ENCODE measurements at regions of chr22 and their contacts with region 1.

Region 1: DNA sequence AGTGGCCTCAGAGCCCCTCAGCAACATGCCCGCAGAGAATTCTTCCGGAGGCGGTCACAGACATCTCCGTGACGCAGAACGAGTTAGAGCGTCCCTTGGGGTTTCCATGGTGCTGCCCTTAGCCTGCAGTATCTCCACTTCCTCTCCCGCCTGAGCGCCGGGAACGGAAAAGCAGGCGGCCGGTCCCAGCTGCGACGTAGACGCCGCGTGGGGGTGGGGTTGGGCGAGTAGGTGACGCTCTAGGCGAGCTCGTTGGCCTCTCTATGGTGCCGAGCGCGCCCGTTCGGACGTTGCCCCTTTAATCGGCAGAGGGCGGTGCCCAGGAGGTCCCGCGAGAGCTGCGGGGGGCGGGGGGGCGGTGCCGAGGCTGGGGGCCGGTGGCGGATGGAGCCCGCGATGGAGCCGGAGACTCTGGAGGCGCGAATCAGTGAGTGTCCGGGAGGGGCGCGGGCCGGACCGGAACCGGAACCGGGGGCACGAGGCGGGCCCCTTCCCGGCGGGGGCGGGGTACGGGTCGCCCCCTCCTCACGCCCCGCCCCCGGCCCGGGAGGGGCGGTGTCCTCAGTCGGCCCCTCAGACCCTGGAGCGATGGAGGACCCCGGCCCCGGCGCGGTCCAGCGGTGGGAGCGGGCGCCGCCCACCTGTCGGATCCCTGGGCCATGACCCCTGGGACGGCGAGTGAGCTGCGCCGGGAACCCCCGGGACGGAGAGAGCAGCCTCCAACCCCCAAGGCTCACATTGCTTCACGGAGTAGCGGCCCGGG is at the start of gene GGA1:
- DNase-seq: no peak
- ATAC-seq: peak; percentile 83
- H3K4me3 ChIP-seq: peak within 1 kb of the TSS; percentile 97
- H3K27ac ChIP-seq: peak within 1 kb of the TSS; percentile 87
- H3K4me1 ChIP-seq: peaks cover 17% of the 10 kb centered on the region
- H3K27me3 ChIP-seq: no peaks in the 10 kb centered on the region
- CTCF ChIP-seq: no peak
- EP300 ChIP-seq: peak in 1 of 2 experiments; percentile 44; a peak in 2 of 4 replicates
- POLR2A ChIP-seq: peak; percentile 77
- RAD21 ChIP-seq: no peak
- polyA plus RNA-seq, gene GGA1: 1.4 to 4.8 TPM

Region 2: GRCh38 chr22:37486224-37486845 is 122.3 kb before region 1 on chr22 and contains the start of gene MFNG:
- CTCF ChIA-PET with region 1: interaction called, 3 read pairs
- POLR2A ChIA-PET with region 1: interaction called, 12 read pairs
- RAD21 ChIA-PET with region 1: no interaction called
- SMC1A ChIA-PET with region 1: interaction called, 5 read pairs
- in situ Hi-C with region 1: no loop called
- intact Hi-C with region 1: loop called (anchors 1 kb)
- DNase-seq: peak; percentile 26
- ATAC-seq: peak; percentile 79
- H3K4me3 ChIP-seq: peak within 1 kb of the TSS; percentile 94
- H3K27ac ChIP-seq: peak within 1 kb of the TSS; percentile 97
- H3K4me1 ChIP-seq: peaks cover 25% of the 10 kb centered on the region
- H3K27me3 ChIP-seq: no peaks in the 10 kb centered on the region
- CTCF ChIP-seq: no peak
- EP300 ChIP-seq: no peak
- POLR2A ChIP-seq: peak; percentile 78
- RAD21 ChIP-seq: no peak
- polyA plus RNA-seq, gene MFNG: 11.5 to 26.1 TPM

Region 3: DNA sequence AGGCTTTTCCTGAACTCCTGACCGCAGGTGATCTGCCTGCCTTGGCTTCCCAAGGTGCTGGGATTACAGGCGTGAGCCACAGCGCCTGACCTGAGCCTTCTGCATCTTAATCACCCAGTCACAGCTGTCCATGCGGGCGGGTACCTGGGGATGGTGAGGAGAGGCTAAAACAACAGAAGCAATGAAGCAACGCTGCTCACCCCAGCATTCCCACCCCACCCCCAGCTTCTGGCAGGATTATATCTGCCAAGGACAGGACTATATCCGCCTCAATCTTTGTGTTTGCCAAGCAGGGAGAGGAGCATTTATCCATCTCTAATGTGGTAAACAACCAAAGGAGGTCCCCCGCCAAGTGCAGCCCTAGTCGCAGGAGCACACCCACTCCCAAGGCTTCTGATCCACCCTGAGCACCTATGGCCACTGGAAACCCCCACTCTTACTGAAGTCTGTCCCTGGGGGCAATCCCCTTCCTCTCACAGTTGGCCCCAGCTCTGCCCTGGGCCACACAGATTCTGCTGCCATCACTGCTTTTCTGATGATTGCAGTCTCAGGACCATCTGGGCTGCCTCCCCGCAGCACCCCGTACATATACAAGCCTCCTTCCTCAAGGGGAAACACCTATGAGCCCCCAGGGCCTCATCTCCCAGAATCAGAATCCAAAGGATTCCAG is 20.0 kb before region 1 on chr22:
- CTCF ChIA-PET with region 1: interaction called, 140 read pairs
- POLR2A ChIA-PET with region 1: interaction called, 18 read pairs
- RAD21 ChIA-PET with region 1: interaction called, 25 read pairs
- SMC1A ChIA-PET with region 1: interaction called, 18 read pairs
- in situ Hi-C with region 1: no loop called
- intact Hi-C with region 1: no loop called
- DNase-seq: no peak
- ATAC-seq: peak; percentile 56
- H3K4me3 ChIP-seq: no peak overlapping the region
- H3K27ac ChIP-seq: no peak overlapping the region
- H3K4me1 ChIP-seq: peaks cover 31% of the 10 kb centered on the region
- H3K27me3 ChIP-seq: no peaks in the 10 kb centered on the region
- CTCF ChIP-seq: no peak
- EP300 ChIP-seq: no peak
- POLR2A ChIP-seq: no peak
- RAD21 ChIP-seq: no peak

Region 4: GRCh38 chr22:37633625-37634416 is 25.2 kb after region 1 on chr22:
- CTCF ChIA-PET with region 1: interaction called, 146 read pairs
- POLR2A ChIA-PET with region 1: interaction called, 67 read pairs
- RAD21 ChIA-PET with region 1: interaction called, 38 read pairs
- SMC1A ChIA-PET with region 1: interaction called, 36 read pairs
- in situ Hi-C with region 1: no loop called
- intact Hi-C with region 1: no loop called
- DNase-seq: peak; percentile 60
- ATAC-seq: peak; percentile 82
- H3K4me3 ChIP-seq: peak overlapping the region; percentile 57
- H3K27ac ChIP-seq: peak overlapping the region; percentile 92
- H3K4me1 ChIP-seq: peaks cover 69% of the 10 kb centered on the region
- H3K27me3 ChIP-seq: no peaks in the 10 kb centered on the region
- CTCF ChIP-seq: peak in 1 of 3 experiments; percentile 18; a peak in 3 of 6 replicates
- EP300 ChIP-seq: peak; percentile 29 to 35; a peak in 3 of 4 replicates
- POLR2A ChIP-seq: peak; percentile 82
- RAD21 ChIP-seq: no peak

Region 5: GRCh38 chr22:37676736-37677492 is 68.3 kb after region 1 on chr22:
- CTCF ChIA-PET with region 1: interaction called, 178 read pairs
- POLR2A ChIA-PET with region 1: interaction called, 49 read pairs
- RAD21 ChIA-PET with region 1: interaction called, 45 read pairs
- SMC1A ChIA-PET with region 1: interaction called, 7 read pairs
- in situ Hi-C with region 1: no loop called
- intact Hi-C with region 1: loop called (anchors 1 kb)
- DNase-seq: no peak
- ATAC-seq: peak; percentile 73
- H3K4me3 ChIP-seq: peak overlapping the region; percentile 91
- H3K27ac ChIP-seq: peak overlapping the region; percentile 85
- H3K4me1 ChIP-seq: peaks cover 37% of the 10 kb centered on the region
- H3K27me3 ChIP-seq: no peaks in the 10 kb centered on the region
- CTCF ChIP-seq: no peak
- EP300 ChIP-seq: no peak
- POLR2A ChIP-seq: peak; percentile 78
- RAD21 ChIP-seq: no peak

Measured in GM12878 (cell line).